SK-N-SH (cell line): ENCODE measurements at regions of chr3 and their contacts with region 1.

Region 1: GRCh38 chr3:107660306-107660976 is 137.7 kb downstream of the BBX start:
- DNase-seq: peak; percentile 12
- H3K4me3 ChIP-seq: no peak overlapping the region
- H3K27ac ChIP-seq: 0 out of 4 replicates have a peak overlapping the region, but pooled peaks of 1 of the 2 experiments have one; percentile 0
- H3K4me1 ChIP-seq: peaks cover 7 to 21% of the 10 kb centered on the region in 2 experiments; a peak in 3 of 4 replicates
- H3K27me3 ChIP-seq: no peaks in the 10 kb centered on the region
- CTCF ChIP-seq: peak; percentile 87
- EP300 ChIP-seq: no peak
- RAD21 ChIP-seq: peak; percentile 72

Region 2: GRCh38 chr3:107643038-107643883 is 17.2 kb before region 1 on chr3:
- CTCF ChIA-PET with region 1: interaction called, 30 read pairs
- POLR2A ChIA-PET with region 1: no interaction called
- DNase-seq: no peak
- H3K4me3 ChIP-seq: no peak overlapping the region
- H3K27ac ChIP-seq: no peak overlapping the region; a peak in 1 of 4 replicates
- H3K4me1 ChIP-seq: peaks cover 0 to 14% of the 10 kb centered on the region in 2 experiments; a peak in 2 of 4 replicates
- H3K27me3 ChIP-seq: no peaks in the 10 kb centered on the region
- CTCF ChIP-seq: peak; percentile 35
- EP300 ChIP-seq: no peak
- RAD21 ChIP-seq: peak; percentile 47

Region 3: DNA sequence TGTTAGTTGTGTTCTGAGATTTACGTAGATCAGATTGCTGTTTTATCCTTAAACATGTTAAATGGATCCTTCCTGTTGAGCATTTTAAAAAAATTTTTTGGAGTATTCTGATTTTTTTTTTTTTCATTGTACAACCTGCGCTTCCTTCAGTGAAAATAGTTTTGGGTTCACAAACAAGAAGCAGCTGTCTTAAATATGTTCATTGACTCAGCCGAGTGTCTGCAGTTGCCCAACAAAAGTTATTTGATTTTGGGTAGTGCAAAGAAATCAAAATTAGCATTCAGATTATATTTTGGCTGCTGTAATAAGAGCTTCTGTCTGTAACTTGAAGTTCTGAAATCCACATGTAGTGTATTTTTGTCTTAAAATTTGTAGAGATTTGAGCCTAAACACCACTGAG is 10.5 kb after region 1 on chr3:
- CTCF ChIA-PET with region 1: interaction called, 72 read pairs
- POLR2A ChIA-PET with region 1: no interaction called
- DNase-seq: no peak
- H3K4me3 ChIP-seq: no peak overlapping the region
- H3K27ac ChIP-seq: no peak overlapping the region; a peak in 1 of 4 replicates
- H3K4me1 ChIP-seq: no peaks in the 10 kb centered on the region; a peak in 3 of 4 replicates
- H3K27me3 ChIP-seq: no peaks in the 10 kb centered on the region
- CTCF ChIP-seq: no peak
- EP300 ChIP-seq: no peak
- RAD21 ChIP-seq: no peak